ENCODE measurements at regions of chr2 and their contacts with region 1.

Region 1: GRCh38 chr2:70301344-70302194 is at the start of gene FAM136A:
- DNase-seq: peak; percentile 92
- H3K4me3 Mint-ChIP-seq: peak within 1 kb of the TSS; percentile 93
- H3K27ac Mint-ChIP-seq: peak within 1 kb of the TSS; percentile 94
- H3K4me1 Mint-ChIP-seq: peaks cover 38% of the 10 kb centered on the region
- H3K27me3 Mint-ChIP-seq: no peaks in the 10 kb centered on the region
- total RNA-seq, gene FAM136A: 41.9 to 44.0 TPM

Region 2: GRCh38 chr2:69914170-69914960 is 387.2 kb before region 1 on chr2:
- CTCF ChIA-PET with region 1: interaction called, 11 read pairs
- intact Hi-C with region 1: loop called (anchors 1 kb)
- DNase-seq: peak; percentile 100
- H3K4me3 Mint-ChIP-seq: peak overlapping the region; percentile 83
- H3K27ac Mint-ChIP-seq: peak overlapping the region; percentile 87
- H3K4me1 Mint-ChIP-seq: peaks cover 36% of the 10 kb centered on the region
- H3K27me3 Mint-ChIP-seq: no peaks in the 10 kb centered on the region

Region 3: DNA sequence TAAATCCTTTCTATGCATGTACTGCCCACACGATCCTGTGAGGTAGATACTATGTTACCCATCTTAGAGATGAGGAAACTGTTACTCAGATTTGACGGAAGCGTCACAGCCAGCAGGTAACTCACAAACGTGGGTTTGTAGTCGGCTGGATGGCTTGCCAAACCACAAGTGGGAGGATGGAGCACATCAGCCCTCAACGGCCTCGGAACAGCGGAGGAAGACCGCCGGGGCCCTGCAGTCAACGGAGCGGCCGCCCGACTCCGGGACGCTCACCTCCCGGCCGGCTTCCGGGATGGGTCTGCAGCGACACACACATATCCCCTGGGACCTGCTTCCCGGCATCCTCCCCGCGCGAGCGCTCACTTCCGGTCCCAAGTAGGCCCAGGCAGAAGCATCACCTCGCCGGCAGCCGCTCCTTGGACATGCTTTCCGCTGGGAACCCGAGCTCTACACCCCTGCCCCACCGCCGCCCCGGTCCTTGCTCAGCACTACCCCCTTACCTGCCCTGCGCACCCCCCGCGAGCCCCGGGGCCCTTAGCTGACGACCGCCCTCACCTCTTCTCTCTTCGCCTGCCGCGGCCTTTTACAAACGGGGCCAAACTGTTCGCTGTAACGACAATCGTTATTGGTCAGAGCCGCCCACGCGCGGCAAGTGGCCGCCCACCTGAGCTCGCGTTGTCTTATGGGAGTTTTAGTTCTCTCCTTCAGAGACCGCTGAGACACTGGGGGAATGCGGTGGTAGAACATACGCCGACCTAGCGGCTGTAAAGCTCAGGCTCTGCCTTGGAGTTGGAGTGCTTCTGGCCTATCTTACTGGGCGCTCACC is 110.9 kb before region 1 on chr2 and contains the start of gene C2orf42:
- CTCF ChIA-PET with region 1: no interaction called
- intact Hi-C with region 1: loop called (anchors 1 kb)
- DNase-seq: peak; percentile 98
- H3K4me3 Mint-ChIP-seq: peak within 1 kb of the TSS; percentile 87
- H3K27ac Mint-ChIP-seq: peak within 1 kb of the TSS; percentile 98
- H3K4me1 Mint-ChIP-seq: peaks cover 21% of the 10 kb centered on the region
- H3K27me3 Mint-ChIP-seq: no peaks in the 10 kb centered on the region
- total RNA-seq, gene C2orf42: 19.2 to 23.3 TPM

Region 4: GRCh38 chr2:70321370-70321769 is 19.8 kb after region 1 on chr2:
- CTCF ChIA-PET with region 1: interaction called, 14 read pairs
- intact Hi-C with region 1: no loop called
- DNase-seq: no peak
- H3K4me3 Mint-ChIP-seq: no peak overlapping the region
- H3K27ac Mint-ChIP-seq: no peak overlapping the region
- H3K4me1 Mint-ChIP-seq: no peaks in the 10 kb centered on the region
- H3K27me3 Mint-ChIP-seq: no peaks in the 10 kb centered on the region

Region 5: GRCh38 chr2:70360661-70361316 is 59.2 kb after region 1 on chr2:
- CTCF ChIA-PET with region 1: no interaction called
- intact Hi-C with region 1: no loop called
- DNase-seq: no peak
- H3K4me3 Mint-ChIP-seq: no peak overlapping the region
- H3K27ac Mint-ChIP-seq: no peak overlapping the region
- H3K4me1 Mint-ChIP-seq: no peaks in the 10 kb centered on the region
- H3K27me3 Mint-ChIP-seq: no peaks in the 10 kb centered on the region

Region 6: DNA sequence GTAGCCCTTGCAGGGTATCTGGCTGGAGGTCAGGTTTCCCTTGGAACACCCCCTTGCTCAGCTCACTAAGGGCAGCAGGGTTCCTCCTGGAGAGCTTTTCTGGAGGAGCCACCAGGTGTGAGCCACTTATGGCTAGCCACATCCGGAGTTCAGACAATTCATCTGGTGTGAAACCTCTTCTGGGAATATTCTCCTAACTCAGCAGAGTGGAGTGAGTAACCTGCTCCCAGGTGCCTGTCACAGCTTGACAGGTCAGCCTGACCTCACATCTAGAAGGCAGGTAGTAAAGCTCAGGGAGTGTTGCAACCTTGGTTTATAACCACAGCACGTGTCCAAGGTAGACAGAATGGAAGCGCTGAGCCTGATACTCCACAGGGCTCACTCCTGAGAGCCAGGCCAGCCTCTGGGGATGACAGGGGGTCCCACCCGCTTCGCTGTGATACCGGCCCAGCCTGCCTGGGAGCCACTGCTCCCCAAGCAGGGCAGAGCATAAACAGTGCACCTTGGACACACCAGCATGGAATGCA is 314.7 kb after region 1 on chr2:
- CTCF ChIA-PET with region 1: interaction called, 59 read pairs
- intact Hi-C with region 1: loop called (anchors 1 kb)
- DNase-seq: no peak
- H3K4me3 Mint-ChIP-seq: no peak overlapping the region
- H3K27ac Mint-ChIP-seq: no peak overlapping the region
- H3K4me1 Mint-ChIP-seq: no peaks in the 10 kb centered on the region
- H3K27me3 Mint-ChIP-seq: no peaks in the 10 kb centered on the region

Region 7: GRCh38 chr2:70767699-70768589 is 466.4 kb after region 1 on chr2 and contains the start of gene ADD2:
- CTCF ChIA-PET with region 1: interaction called, 6 read pairs
- intact Hi-C with region 1: loop called (anchors 5 kb)
- DNase-seq: peak; percentile 89
- H3K4me3 Mint-ChIP-seq: peak within 1 kb of the TSS; percentile 91
- H3K27ac Mint-ChIP-seq: peak within 1 kb of the TSS; percentile 83
- H3K4me1 Mint-ChIP-seq: peaks cover 8% of the 10 kb centered on the region
- H3K27me3 Mint-ChIP-seq: peaks cover 10% of the 10 kb centered on the region
- total RNA-seq, gene ADD2: 42.9 to 46.2 TPM

Region 8: GRCh38 chr2:70948337-70949003 is 646.9 kb after region 1 on chr2:
- CTCF ChIA-PET with region 1: interaction called, 10 read pairs
- intact Hi-C with region 1: loop called (anchors 1 kb)
- DNase-seq: peak; percentile 87
- H3K4me3 Mint-ChIP-seq: peak overlapping the region; percentile 79
- H3K27ac Mint-ChIP-seq: no peak overlapping the region
- H3K4me1 Mint-ChIP-seq: peaks cover 13% of the 10 kb centered on the region
- H3K27me3 Mint-ChIP-seq: peaks cover 6% of the 10 kb centered on the region

Measured in activated naive CD4-positive, alpha-beta T cell treated with anti-CD3 and anti-CD28 coated beads for 36 hours (primary cell).